GM13977 (cell line): ENCODE measurements at regions of chr5 and their contacts with region 1.

Region 1: GRCh38 chr5:83401122-83401731 is 70.3 kb upstream of the VCAN start:
- DNase-seq: peak; percentile 9
- CTCF ChIP-seq: no peak

Region 2: GRCh38 chr5:82885627-82886389 is 515.4 kb before region 1 on chr5:
- in situ Hi-C with region 1: loop called (anchors 25 kb)
- DNase-seq: peak; percentile 26
- CTCF ChIP-seq: peak; percentile 37

Region 3: DNA sequence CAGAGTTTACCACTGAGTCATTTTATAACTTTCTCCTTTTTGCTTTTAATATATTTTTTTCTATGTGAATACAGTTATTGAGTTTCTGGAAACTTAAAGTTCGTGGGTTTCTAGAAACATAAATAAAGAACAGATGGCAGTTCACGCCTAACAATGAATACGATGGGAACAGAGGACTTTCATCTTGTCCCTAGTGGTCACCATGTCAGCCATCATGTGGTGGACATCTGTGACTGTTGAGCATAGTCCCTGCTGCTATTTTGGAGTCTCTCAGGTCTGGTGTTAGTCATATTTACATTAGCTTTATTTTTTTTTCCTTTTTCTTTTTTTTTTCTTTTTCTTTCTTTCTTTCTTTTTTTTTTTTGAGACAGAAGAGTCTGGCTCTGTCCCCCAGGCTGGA is 238.6 kb before region 1 on chr5:
- in situ Hi-C with region 1: no loop called
- DNase-seq: no peak
- CTCF ChIP-seq: no peak

Region 4: DNA sequence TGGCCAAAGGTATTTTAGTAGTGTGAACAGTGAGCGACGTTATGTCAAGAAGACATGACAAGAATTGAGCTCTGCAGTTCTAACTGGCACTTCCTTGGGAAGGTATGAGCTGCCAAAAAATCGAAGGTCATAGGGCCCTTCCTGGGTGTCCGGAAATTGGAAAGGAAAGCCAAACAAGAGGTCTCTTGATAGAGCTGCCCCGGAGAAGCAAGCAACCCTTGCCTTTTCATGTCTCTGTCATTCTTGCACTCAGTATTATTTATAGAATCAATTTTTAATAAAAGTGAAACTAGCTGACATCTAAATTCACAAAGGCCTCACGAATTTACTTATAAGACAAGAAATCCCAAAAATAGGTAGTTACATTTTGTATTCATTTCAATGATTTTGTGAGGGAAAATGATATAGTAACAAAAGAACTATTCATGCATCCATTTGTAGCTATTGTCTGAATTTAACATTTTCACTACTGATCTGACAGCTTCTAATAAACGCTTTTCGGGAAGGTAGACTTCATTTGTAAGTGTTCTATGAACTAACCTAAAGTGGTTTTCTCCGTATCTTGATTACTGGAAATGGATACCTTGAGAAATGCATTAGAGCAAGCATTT is 43.5 kb before region 1 on chr5:
- in situ Hi-C with region 1: no loop called
- DNase-seq: peak; percentile 4
- CTCF ChIP-seq: no peak

Region 5: GRCh38 chr5:83608122-83608521 is 206.9 kb after region 1 on chr5:
- in situ Hi-C with region 1: no loop called
- DNase-seq: peak; percentile 25
- CTCF ChIP-seq: peak; percentile 60